ENCODE measurements at regions of chr18 and their contacts with region 1.

Region 1: GRCh38 chr18:45974088-45974536 is 7.0 kb upstream of the EPG5 start:
- DNase-seq: peak; percentile 37
- ATAC-seq: peak; percentile 83

Region 2: GRCh38 chr18:45664824-45665763 is 309.0 kb before region 1 on chr18:
- intact Hi-C with region 1: loop called in 1 of 2 experiments (anchors 10 kb)
- DNase-seq: peak; percentile 35
- ATAC-seq: peak; percentile 71 to 79

Region 3: DNA sequence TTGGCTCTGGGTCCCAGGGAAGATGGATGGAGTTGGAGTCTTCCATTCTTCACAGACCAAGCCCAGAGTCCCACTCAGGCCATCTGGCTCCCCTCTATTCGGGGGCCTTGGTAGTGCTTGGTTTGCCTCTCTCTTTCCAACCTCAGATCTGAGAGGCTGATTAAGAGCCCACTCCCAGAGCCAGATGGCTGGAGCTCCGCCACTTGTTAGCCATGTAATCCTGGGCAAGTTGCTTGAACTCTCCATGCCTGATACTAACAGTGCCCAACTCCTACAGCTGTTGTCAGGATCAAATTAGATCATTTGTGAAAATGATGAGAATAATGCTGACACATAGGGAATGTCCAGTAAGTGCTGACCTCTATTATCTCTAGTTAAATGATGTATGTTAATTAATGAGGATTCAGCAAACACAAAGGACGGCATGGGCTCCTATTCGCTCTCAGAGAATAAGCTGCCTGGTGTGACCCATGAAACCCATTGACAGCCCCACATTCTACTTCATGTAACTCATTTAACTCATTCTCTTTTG is 296.8 kb before region 1 on chr18:
- intact Hi-C with region 1: loop called in 1 of 2 experiments (anchors 5 kb)
- DNase-seq: no peak
- ATAC-seq: no peak

Region 4: DNA sequence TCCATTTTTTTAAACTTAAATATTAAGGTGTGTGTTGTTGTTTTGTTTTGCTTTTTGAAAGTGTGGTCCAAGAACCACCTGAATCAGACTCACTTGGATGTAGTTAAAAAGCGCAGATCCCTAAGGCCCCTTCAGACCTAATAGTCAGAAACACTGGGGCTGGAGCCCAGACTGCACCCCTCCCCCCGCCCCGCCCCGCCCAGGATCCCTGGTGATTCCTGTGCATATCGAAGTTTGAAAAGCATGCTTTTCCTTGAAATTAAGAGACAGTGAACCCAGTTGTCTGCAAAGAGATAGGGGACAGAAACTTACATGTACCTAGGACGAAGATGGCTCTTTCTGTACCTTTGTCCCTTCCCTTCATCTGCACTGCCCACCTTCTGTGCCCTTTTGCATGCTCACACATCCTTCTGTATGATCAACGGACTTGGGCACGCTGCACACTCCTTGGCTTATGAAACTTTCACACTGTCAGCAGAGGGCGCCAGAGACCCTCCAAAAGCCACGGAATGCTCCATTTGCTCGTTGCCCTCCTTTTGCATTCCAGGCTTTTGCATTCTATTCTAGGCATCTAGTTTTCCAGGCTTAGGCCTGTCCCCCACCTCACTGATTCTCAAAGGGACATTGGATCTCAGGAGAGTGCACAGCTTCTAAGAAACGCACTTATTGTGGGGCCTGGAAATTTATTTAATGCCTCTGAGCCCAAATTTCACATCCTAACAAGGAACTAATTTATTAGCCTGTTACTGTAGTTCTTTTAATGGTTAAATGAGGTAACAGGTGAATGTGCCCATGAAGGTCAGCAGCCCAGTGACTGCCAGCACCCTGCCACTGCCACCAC is 282.9 kb before region 1 on chr18:
- intact Hi-C with region 1: loop called in 1 of 2 experiments (anchors 5 kb)
- DNase-seq: peak; percentile 83
- ATAC-seq: peak; percentile 80 to 90

Region 5: GRCh38 chr18:46073474-46074331 is 99.6 kb after region 1 on chr18:
- intact Hi-C with region 1: loop called in 1 of 2 experiments (anchors 10 kb)
- DNase-seq: no peak
- ATAC-seq: peak; percentile 16 to 32

Region 6: DNA sequence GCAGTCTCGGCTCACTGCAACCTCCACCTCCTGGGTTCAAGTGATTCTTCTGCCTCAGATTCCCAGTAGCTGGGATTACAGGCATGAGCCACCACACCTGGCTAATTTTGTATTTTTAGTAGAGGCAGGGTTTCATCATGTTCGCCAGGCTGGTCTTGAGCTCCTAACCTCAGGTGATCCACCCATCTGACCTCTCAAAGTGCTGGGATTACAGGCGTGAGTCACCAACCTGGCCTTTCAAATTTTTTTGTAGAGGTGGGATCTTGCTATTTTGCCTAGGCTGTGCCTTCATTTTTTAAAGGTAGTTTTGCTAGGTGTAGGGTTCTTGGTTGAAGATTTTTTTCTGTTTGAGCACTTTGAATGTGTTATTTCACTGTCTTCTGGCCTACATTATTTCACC is 136.3 kb after region 1 on chr18:
- intact Hi-C with region 1: no loop called
- DNase-seq: no peak
- ATAC-seq: no peak

Measured in left cardiac atrium (tissue), 4 donors.